MCF 10A (cell line): ENCODE measurements at regions of chr17 and their contacts with region 1.

Region 1: DNA sequence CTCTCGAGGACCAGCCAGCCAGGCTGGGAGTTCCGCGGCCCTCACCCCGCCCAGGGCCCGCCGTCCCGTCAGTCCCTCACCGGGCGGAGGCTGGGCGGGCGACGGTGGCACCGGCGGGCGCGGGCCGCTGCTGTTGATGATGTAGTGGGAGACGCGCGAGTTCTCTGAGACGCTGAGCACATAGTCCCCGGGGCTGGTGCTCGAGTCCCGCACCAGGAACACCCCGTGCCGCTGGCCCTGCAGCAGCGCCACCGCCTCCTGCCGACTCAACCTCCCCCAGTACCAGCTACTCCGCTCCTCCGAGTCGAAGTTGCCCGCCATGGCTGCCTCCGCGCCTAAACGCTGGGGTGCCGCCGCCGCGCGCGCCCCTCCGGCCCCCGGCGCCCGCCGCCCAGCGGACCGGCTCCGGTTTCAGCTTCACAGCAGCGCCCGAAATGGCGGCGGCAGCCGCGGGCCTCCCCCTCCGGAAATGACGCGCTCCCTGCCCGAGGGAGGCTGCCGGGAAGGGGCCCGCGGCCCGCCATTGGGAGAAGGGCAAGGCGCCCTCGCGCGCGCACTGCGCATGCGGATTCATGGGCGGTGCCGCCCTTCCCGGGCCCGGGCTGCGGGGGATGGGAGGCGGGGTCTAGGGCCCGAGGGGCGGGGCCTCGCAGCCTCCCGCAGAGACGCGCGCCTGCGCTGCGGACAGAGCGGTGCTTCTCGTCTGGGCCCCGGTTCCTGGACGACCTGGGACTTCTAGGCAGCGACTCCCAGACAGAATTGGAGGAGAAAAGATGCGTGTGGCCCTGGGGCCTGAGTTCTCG is at the start of gene CRK:
- DNase-seq: peak; percentile 96
- H3K4me3 Mint-ChIP-seq: peak within 1 kb of the TSS; percentile 85
- H3K27ac Mint-ChIP-seq: peak within 1 kb of the TSS; percentile 76
- H3K4me1 Mint-ChIP-seq: peaks cover 16% of the 10 kb centered on the region
- H3K27me3 Mint-ChIP-seq: no peaks in the 10 kb centered on the region
- CTCF ChIP-seq: no peak
- total RNA-seq, gene CRK: 70.6 and 82.9 TPM in 2 replicates

Region 2: DNA sequence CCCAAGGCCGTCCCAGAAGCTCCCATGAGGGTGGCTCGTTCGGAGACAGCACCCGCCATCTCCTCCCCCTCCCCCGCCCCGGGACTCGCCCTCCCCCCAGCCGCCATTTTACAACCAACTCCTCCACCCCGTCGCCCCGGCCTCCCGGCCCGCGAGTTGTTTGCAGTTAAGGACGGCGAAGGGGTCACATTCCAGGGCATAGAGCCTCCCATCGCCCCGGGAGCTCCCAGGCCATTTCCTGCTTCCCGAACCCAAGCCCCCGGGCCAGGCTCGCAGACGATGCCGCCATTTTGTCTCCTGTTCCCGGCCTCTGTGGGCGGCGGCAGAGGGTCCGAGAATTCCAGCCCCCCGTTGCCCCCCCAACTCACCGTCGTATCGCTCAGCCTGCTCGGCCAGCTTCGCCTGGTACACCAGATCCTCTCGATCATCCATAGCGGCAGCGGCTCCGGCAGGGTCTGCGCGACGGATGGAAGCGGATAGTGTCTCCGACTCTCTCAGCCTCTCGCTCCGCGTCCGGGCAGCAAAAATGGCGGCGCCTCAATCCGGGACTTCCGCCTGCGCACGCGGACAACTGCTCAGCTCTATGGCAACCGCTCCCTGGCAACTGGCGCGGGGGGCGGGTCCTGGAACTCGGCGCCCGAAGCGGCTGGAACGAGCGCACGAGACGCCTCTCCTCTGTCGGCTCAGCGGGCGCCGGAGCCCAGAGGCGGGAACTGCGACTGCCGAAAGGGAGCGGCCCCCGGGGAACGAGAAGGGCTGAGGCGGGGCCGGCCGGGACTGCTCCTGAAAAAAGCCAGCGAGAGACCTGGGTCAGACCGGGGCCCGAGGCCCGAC is 56.1 kb before region 1 on chr17 and contains the start of gene YWHAE:
- CTCF ChIA-PET with region 1: interaction called, 3 read pairs
- POLR2A ChIA-PET with region 1: interaction called, 9 read pairs
- intact Hi-C with region 1: loop called (anchors 5 kb)
- DNase-seq: peak; percentile 96
- H3K4me3 Mint-ChIP-seq: peak within 1 kb of the TSS; percentile 92
- H3K27ac Mint-ChIP-seq: peak within 1 kb of the TSS; percentile 100
- H3K4me1 Mint-ChIP-seq: peaks cover 11% of the 10 kb centered on the region
- H3K27me3 Mint-ChIP-seq: no peaks in the 10 kb centered on the region
- CTCF ChIP-seq: no peak
- total RNA-seq, gene YWHAE: 813 and 886 TPM in 2 replicates

Region 3: DNA sequence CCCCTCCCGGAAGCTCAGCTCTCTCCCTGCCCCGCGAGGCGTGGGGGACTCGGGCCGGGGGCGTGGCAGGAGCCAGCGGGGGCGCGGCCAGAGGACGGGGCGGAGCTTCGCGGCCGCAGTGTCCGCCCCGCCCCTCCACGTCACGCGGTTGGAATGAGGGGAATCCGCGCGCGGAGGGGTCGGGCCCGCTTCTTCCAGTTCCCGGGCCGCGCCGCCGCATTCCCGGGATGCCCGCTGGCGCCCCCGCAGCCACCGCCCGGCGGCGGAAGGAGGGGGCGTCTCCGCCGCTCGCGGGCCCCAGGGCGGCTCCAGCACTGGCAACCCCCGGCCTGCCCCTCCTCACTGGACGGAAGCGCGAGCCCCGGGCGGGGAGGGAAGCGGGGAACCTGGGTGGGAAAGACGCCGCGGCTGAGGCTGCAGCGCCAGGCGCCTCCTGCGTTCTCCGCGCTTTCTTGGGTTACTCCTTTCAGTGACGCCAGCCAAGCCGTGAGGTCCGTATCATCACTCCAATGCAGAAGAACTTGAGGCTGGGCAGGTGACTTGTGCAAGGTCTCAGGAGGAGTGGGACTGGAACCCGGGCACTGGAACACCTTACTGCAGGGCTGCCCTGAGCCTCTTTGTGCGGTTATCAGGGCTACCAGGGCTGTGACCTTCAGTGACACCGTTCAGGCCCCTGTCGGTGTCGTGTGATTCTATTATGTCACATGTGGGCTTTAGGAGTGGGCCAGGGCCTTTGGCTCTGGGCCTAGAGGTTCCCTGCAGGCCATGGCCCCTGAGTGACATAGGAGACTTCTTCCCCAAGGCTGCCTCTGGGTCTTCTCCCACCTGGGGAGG is 32.2 kb after region 1 on chr17:
- CTCF ChIA-PET with region 1: no interaction called
- POLR2A ChIA-PET with region 1: interaction called, 14 read pairs
- intact Hi-C with region 1: loop called (anchors 1 kb)
- DNase-seq: peak; percentile 69
- H3K4me3 Mint-ChIP-seq: peak overlapping the region; percentile 73
- H3K27ac Mint-ChIP-seq: peak overlapping the region; percentile 75
- H3K4me1 Mint-ChIP-seq: peaks cover 17% of the 10 kb centered on the region
- H3K27me3 Mint-ChIP-seq: no peaks in the 10 kb centered on the region
- CTCF ChIP-seq: no peak

Region 4: DNA sequence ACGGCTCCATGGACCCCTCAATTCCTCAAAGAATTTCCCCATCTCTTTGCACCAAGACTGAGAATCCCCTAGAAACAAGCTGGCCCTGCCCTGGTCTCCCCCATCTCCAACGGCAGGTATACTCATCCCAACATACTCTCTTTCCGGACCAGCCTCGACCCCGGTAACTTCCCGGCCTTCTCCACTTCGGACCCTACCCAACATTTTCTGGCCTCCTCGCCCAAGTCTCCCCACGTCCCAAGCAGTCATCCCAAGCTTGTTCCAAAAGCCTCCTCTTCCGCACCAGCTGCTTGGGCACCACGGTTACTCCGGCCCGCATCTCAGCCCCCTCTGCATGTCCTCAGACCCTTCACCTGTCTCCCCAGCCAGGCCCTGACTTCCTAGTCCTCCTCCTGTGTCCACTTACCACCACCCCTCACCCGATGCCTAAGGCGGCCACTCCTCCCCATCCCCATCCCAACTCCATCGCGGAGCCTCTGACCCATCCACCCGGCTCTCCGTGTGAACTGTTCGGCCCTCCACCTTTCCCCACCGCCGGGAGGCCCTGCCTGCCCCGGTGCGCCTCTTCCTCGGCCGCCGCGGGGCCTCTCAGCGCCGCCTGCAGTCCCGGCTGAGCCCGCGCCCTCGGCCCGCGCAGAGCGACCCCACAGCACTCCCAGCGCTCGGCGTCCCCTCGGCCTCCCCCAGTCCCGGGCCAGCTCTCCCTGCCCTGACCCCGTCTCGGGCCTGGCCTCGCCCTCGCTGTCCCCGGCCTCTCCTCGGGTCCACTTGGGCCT is 105.6 kb after region 1 on chr17:
- CTCF ChIA-PET with region 1: no interaction called
- POLR2A ChIA-PET with region 1: interaction called, 6 read pairs
- intact Hi-C with region 1: loop called (anchors 2 kb)
- DNase-seq: no peak
- H3K4me3 Mint-ChIP-seq: peak overlapping the region; percentile 90
- H3K27ac Mint-ChIP-seq: peak overlapping the region; percentile 97
- H3K4me1 Mint-ChIP-seq: peaks cover 14% of the 10 kb centered on the region
- H3K27me3 Mint-ChIP-seq: no peaks in the 10 kb centered on the region
- CTCF ChIP-seq: peak; percentile 11

Region 5: GRCh38 chr17:1571661-1572250 is 115.8 kb after region 1 on chr17:
- CTCF ChIA-PET with region 1: no interaction called
- POLR2A ChIA-PET with region 1: no interaction called
- intact Hi-C with region 1: no loop called
- DNase-seq: no peak
- H3K4me3 Mint-ChIP-seq: no peak overlapping the region
- H3K27ac Mint-ChIP-seq: no peak overlapping the region
- H3K4me1 Mint-ChIP-seq: no peaks in the 10 kb centered on the region
- H3K27me3 Mint-ChIP-seq: no peaks in the 10 kb centered on the region
- CTCF ChIP-seq: no peak

Region 6: DNA sequence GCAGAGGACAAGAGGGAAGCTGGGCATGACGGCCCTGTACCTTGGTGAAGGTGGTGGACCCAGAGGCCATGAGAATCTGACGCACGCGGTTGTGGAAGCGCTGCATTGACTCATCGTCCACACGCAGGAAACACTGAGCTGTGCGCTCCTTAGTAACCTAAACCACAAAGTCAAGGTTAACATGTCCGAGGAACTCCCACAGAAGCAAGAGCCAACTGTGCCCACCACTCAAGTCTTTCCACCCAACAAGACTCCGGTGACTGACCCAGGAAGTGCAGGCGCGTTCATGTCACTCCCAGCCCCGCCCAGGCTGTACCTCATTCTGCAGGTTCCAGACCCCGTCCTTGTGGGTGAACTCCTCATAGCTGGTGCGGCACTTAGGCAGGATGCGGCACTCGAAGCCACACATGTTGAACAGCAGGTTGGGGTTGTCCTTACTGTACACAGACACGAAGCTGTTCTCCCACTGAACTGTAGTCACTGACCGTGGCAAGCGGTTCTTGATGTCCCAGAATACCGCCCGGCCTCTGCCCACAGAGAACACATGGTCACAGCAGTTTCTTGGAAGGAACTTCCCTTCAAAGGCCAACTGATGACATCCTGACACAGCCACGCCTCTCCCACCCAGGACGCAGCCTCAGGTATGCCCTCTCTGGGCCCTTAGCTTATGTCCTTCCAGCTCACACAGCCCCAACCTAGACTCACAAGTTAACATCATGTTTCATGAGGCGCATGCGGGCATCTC is 217.2 kb after region 1 on chr17:
- CTCF ChIA-PET with region 1: no interaction called
- POLR2A ChIA-PET with region 1: no interaction called
- intact Hi-C with region 1: no loop called
- DNase-seq: no peak
- H3K4me3 Mint-ChIP-seq: no peak overlapping the region
- H3K27ac Mint-ChIP-seq: no peak overlapping the region
- H3K4me1 Mint-ChIP-seq: peaks cover 11% of the 10 kb centered on the region
- H3K27me3 Mint-ChIP-seq: no peaks in the 10 kb centered on the region
- CTCF ChIP-seq: no peak